ENCODE measurements at regions of chr19 and their contacts with region 1.

Region 1: GRCh38 chr19:2782936-2783780 is at the start of gene SGTA:
- DNase-seq: peak; percentile 98
- H3K4me3 ChIP-seq: peak within 1 kb of the TSS; percentile 88 to 99 (median 89)
- H3K27ac ChIP-seq: peak within 1 kb of the TSS; percentile 93 to 97
- H3K4me1 ChIP-seq: peaks cover 5 to 19% of the 10 kb centered on the region in 2 donors
- H3K27me3 ChIP-seq: no peaks in the 10 kb centered on the region
- CTCF ChIP-seq: peak in 2 of 3 donors; percentile 45 to 73
- POLR2A ChIP-seq: peak; percentile 84
- total RNA-seq, gene SGTA: 40.3 to 45.2 (median 42.1) TPM

Region 2: GRCh38 chr19:1249298-1249989 is 1533.7 kb before region 1 on chr19:
- intact Hi-C with region 1: loop called (anchors 5 kb)
- DNase-seq: peak; percentile 94 to 97
- H3K4me3 ChIP-seq: peak overlapping the region; percentile 83 to 97 (median 94)
- H3K27ac ChIP-seq: peak overlapping the region; percentile 99
- H3K4me1 ChIP-seq: peaks cover 29 to 36% of the 10 kb centered on the region in 2 donors
- H3K27me3 ChIP-seq: no peaks in the 10 kb centered on the region
- CTCF ChIP-seq: no peak
- POLR2A ChIP-seq: peak; percentile 95

Region 3: DNA sequence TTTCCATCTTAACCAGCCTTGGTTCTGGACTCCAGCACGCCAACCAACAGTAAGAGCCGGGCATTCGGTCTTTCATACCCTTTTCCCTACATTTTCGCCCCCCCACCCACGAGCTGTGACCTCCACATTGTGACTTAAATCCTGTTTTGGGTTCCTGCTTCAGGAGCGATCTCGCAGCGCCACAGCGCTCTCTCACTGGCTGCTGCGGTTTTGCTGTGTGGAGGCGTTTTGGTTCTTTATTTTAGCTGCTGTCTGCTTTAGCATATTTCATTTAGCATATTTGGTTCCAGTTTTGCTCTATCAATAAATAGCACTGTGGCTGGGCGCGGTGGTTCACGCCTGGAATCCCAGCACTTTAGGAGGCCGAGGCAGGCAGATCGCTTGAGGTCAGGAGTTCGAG is 23.8 kb before region 1 on chr19:
- intact Hi-C with region 1: no loop called
- DNase-seq: no peak
- H3K4me3 ChIP-seq: no peak overlapping the region
- H3K27ac ChIP-seq: no peak overlapping the region
- H3K4me1 ChIP-seq: no peaks in the 10 kb centered on the region
- H3K27me3 ChIP-seq: no peaks in the 10 kb centered on the region
- CTCF ChIP-seq: no peak
- POLR2A ChIP-seq: no peak

Region 4: DNA sequence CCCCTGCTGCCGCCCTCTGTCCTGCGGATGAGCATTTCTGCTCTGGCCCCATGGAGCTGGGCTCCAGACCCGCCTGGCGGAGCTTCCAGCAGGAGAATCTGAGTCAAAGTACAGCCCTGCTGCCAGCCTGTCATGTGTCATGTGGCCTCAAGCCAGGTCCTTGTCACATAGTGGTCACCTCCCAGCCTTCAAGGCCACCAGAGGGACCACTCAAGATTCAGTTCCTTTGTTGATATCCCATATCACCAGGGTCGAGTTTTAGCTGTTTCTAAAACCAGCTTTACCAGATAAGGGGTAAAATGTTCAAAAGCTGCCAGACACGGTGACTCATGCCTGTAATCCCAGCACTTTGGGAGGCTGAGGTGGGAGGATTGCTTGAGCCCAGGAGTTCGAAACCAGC is 15.6 kb after region 1 on chr19:
- intact Hi-C with region 1: no loop called
- DNase-seq: no peak
- H3K4me3 ChIP-seq: no peak overlapping the region
- H3K27ac ChIP-seq: no peak overlapping the region
- H3K4me1 ChIP-seq: no peaks in the 10 kb centered on the region
- H3K27me3 ChIP-seq: no peaks in the 10 kb centered on the region
- CTCF ChIP-seq: no peak
- POLR2A ChIP-seq: no peak

Measured in breast epithelium (tissue), 4 donors.